ENCODE measurements at regions of chr6 and their contacts with region 1.

Region 1: GRCh38 chr6:29942275-29943052 is at the start of gene HLA-A:
- DNase-seq: peak; percentile 96
- ATAC-seq: peak; percentile 91
- H3K4me3 Mint-ChIP-seq: peak within 1 kb of the TSS; percentile 88
- H3K27ac Mint-ChIP-seq: peak within 1 kb of the TSS; percentile 100
- H3K4me1 Mint-ChIP-seq: peaks cover 58% of the 10 kb centered on the region
- H3K27me3 Mint-ChIP-seq: no peaks in the 10 kb centered on the region
- total RNA-seq, gene HLA-A: 1,053 to 1,189 TPM

Region 2: DNA sequence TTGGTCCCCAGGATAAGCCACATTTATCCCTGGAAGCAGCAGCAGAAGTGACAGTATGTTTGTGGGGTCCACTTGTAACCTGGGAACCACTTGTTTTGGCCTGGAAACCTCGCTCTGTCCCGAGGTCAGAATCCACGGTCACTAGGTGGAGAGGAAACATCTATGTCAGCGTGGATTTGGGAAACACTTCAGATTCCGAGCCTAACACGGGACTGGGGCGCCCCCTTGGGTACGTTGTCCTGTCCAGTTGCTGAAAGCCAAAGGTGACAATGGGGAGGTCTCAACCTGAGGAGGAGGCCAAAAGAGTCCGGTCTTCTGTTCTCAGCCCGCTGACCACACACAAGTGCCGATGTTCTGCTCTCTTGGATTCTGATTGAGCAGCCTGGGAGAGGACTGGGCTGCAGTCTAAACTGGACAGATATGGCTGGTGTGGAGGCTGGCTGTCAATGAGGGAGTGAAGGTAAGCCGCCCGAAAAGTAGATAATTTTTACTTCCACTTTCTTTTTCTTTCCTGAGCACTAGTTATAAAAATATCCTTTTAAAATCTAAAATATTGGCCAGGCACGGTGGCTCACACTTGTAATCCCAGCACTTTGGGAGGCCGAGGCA is 256.6 kb before region 1 on chr6:
- CTCF ChIA-PET with region 1: no interaction called
- POLR2A ChIA-PET with region 1: no interaction called
- intact Hi-C with region 1: no loop called
- DNase-seq: no peak
- ATAC-seq: no peak
- H3K4me3 Mint-ChIP-seq: no peak overlapping the region
- H3K27ac Mint-ChIP-seq: no peak overlapping the region
- H3K4me1 Mint-ChIP-seq: no peaks in the 10 kb centered on the region
- H3K27me3 Mint-ChIP-seq: no peaks in the 10 kb centered on the region

Region 3: GRCh38 chr6:29705389-29706231 is 236.9 kb before region 1 on chr6:
- CTCF ChIA-PET with region 1: no interaction called
- POLR2A ChIA-PET with region 1: no interaction called
- intact Hi-C with region 1: loop called in 1 of 2 experiments (anchors 5 kb)
- DNase-seq: no peak
- ATAC-seq: no peak
- H3K4me3 Mint-ChIP-seq: no peak overlapping the region
- H3K27ac Mint-ChIP-seq: no peak overlapping the region
- H3K4me1 Mint-ChIP-seq: peaks cover 47% of the 10 kb centered on the region
- H3K27me3 Mint-ChIP-seq: peaks cover 10% of the 10 kb centered on the region

Region 4: GRCh38 chr6:29752451-29753308 is 189.8 kb before region 1 on chr6:
- CTCF ChIA-PET with region 1: no interaction called
- POLR2A ChIA-PET with region 1: no interaction called
- intact Hi-C with region 1: loop called in 1 of 2 experiments (anchors 1 kb)
- DNase-seq: peak; percentile 93
- ATAC-seq: peak; percentile 80
- H3K4me3 Mint-ChIP-seq: peak overlapping the region; percentile 83
- H3K27ac Mint-ChIP-seq: peak overlapping the region; percentile 89
- H3K4me1 Mint-ChIP-seq: peaks cover 23% of the 10 kb centered on the region
- H3K27me3 Mint-ChIP-seq: no peaks in the 10 kb centered on the region

Region 5: GRCh38 chr6:29887819-29888776 is 54.4 kb before region 1 on chr6:
- CTCF ChIA-PET with region 1: no interaction called
- POLR2A ChIA-PET with region 1: interaction called, 14 read pairs
- intact Hi-C with region 1: loop called (anchors 1 to 2 kb)
- DNase-seq: peak; percentile 90
- ATAC-seq: peak; percentile 77
- H3K4me3 Mint-ChIP-seq: peak overlapping the region; percentile 77
- H3K27ac Mint-ChIP-seq: peak overlapping the region; percentile 80
- H3K4me1 Mint-ChIP-seq: peaks cover 16% of the 10 kb centered on the region
- H3K27me3 Mint-ChIP-seq: no peaks in the 10 kb centered on the region

Region 6: GRCh38 chr6:29964887-29965562 is 22.6 kb after region 1 on chr6:
- CTCF ChIA-PET with region 1: interaction called, 4 read pairs
- POLR2A ChIA-PET with region 1: interaction called, 5 read pairs
- intact Hi-C with region 1: loop called (anchors 1 kb)
- DNase-seq: peak; percentile 88
- ATAC-seq: peak; percentile 93
- H3K4me3 Mint-ChIP-seq: peak overlapping the region; percentile 84
- H3K27ac Mint-ChIP-seq: peak overlapping the region; percentile 97
- H3K4me1 Mint-ChIP-seq: peaks cover 42% of the 10 kb centered on the region
- H3K27me3 Mint-ChIP-seq: no peaks in the 10 kb centered on the region

Region 7: GRCh38 chr6:30212865-30213666 is 270.6 kb after region 1 on chr6 and contains the start of gene TRIM26:
- CTCF ChIA-PET with region 1: no interaction called
- POLR2A ChIA-PET with region 1: no interaction called
- intact Hi-C with region 1: loop called in 1 of 2 experiments (anchors 5 kb)
- DNase-seq: peak; percentile 98
- ATAC-seq: peak; percentile 90
- H3K4me3 Mint-ChIP-seq: peak within 1 kb of the TSS; percentile 89
- H3K27ac Mint-ChIP-seq: peak within 1 kb of the TSS; percentile 99
- H3K4me1 Mint-ChIP-seq: peaks cover 50% of the 10 kb centered on the region
- H3K27me3 Mint-ChIP-seq: no peaks in the 10 kb centered on the region
- total RNA-seq, gene TRIM26: 48.4 to 60.4 TPM

Measured in activated CD4-positive, alpha-beta T cell treated with anti-CD3 and anti-CD28 coated beads for 36 hours (primary cell).